Sciatic nerve (tissue), 2 donors: ENCODE measurements at regions of chr6 and their contacts with region 1.

Region 1: DNA sequence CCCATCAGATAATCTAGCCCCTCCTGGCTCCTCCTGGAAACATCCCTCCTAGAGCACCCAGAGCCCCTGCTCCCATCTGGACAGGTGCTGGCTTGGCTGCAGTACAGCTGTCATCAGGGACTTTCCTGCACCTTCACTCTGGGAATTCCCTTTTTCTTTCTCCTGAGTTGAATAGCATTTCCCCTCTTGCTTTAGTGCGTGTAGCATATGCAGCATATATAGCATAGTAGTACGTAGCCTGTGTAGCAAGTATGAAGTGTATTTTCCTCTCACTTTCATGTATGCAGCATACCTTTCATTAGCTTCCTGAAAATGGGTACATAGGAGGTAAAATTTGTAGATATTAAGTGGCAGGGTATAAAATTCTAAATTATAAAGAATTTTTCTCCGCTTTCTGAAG is 352.9 kb downstream of the ESR1 start:
- DNase-seq: no peak
- ATAC-seq: no peak

Region 2: GRCh38 chr6:152201120-152201519 is 40.8 kb after region 1 on chr6:
- intact Hi-C with region 1: no loop called
- DNase-seq: no peak
- ATAC-seq: no peak

Region 3: DNA sequence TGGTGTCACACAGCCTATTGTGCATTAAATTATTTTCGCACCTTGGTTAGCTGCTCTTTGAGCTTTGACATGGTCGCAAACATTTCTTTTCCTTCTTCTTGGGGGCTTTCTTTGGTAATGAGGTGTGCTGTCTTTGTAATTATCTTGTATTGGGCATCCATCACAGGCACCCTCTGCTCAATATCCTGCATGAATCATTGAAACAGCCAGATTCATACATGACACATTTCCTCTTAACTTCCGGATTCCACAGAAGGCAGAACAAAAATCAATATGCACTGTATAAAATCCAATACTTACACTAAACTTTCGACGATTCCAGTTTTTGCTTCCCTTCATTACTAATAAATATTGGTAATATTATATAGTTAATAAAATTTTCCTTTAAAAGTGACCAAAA is 301.2 kb after region 1 on chr6:
- intact Hi-C with region 1: loop called (anchors 10 kb)
- DNase-seq: no peak
- ATAC-seq: no peak